ENCODE measurements at regions of chr6 and their contacts with region 1.

Region 1: GRCh38 chr6:14841901-14842421 is 403.9 kb upstream of the JARID2 start:
- DNase-seq: peak; percentile 88
- H3K4me3 Mint-ChIP-seq: peak overlapping the region; percentile 42
- H3K27ac Mint-ChIP-seq: peak overlapping the region; percentile 83
- H3K4me1 Mint-ChIP-seq: peaks cover 15% of the 10 kb centered on the region
- H3K27me3 Mint-ChIP-seq: no peaks in the 10 kb centered on the region
- CTCF ChIP-seq: no peak

Region 2: GRCh38 chr6:14975471-14975817 is 133.5 kb after region 1 on chr6:
- CTCF ChIA-PET with region 1: no interaction called
- POLR2A ChIA-PET with region 1: no interaction called
- intact Hi-C with region 1: no loop called
- DNase-seq: peak; percentile 17
- H3K4me3 Mint-ChIP-seq: no peak overlapping the region
- H3K27ac Mint-ChIP-seq: no peak overlapping the region
- H3K4me1 Mint-ChIP-seq: no peaks in the 10 kb centered on the region
- H3K27me3 Mint-ChIP-seq: no peaks in the 10 kb centered on the region
- CTCF ChIP-seq: no peak

Region 3: GRCh38 chr6:15062516-15063252 is 220.7 kb after region 1 on chr6:
- CTCF ChIA-PET with region 1: no interaction called
- POLR2A ChIA-PET with region 1: no interaction called
- intact Hi-C with region 1: loop called (anchors 10 kb)
- DNase-seq: peak; percentile 88
- H3K4me3 Mint-ChIP-seq: no peak overlapping the region
- H3K27ac Mint-ChIP-seq: peak overlapping the region; percentile 9
- H3K4me1 Mint-ChIP-seq: peaks cover 22% of the 10 kb centered on the region
- H3K27me3 Mint-ChIP-seq: no peaks in the 10 kb centered on the region
- CTCF ChIP-seq: no peak

Measured in MCF 10A (cell line).